GM23248 (cell line): ENCODE measurements at regions of chr1 and their contacts with region 1.

Region 1: GRCh38 chr1:205240118-205240517 is 12.4 kb downstream of the TMCC2 start:
- DNase-seq: no peak
- H3K4me3 ChIP-seq: no peak overlapping the region
- H3K27ac ChIP-seq: no peak overlapping the region
- H3K4me1 ChIP-seq: no peaks in the 10 kb centered on the region
- H3K27me3 ChIP-seq: no peaks in the 10 kb centered on the region

Region 2: GRCh38 chr1:204989266-204990058 is 250.7 kb before region 1 on chr1:
- in situ Hi-C with region 1: loop called (anchors 5 kb)
- DNase-seq: peak; percentile 86
- H3K4me3 ChIP-seq: no peak overlapping the region
- H3K27ac ChIP-seq: no peak overlapping the region
- H3K4me1 ChIP-seq: peaks cover 7% of the 10 kb centered on the region
- H3K27me3 ChIP-seq: no peaks in the 10 kb centered on the region

Region 3: DNA sequence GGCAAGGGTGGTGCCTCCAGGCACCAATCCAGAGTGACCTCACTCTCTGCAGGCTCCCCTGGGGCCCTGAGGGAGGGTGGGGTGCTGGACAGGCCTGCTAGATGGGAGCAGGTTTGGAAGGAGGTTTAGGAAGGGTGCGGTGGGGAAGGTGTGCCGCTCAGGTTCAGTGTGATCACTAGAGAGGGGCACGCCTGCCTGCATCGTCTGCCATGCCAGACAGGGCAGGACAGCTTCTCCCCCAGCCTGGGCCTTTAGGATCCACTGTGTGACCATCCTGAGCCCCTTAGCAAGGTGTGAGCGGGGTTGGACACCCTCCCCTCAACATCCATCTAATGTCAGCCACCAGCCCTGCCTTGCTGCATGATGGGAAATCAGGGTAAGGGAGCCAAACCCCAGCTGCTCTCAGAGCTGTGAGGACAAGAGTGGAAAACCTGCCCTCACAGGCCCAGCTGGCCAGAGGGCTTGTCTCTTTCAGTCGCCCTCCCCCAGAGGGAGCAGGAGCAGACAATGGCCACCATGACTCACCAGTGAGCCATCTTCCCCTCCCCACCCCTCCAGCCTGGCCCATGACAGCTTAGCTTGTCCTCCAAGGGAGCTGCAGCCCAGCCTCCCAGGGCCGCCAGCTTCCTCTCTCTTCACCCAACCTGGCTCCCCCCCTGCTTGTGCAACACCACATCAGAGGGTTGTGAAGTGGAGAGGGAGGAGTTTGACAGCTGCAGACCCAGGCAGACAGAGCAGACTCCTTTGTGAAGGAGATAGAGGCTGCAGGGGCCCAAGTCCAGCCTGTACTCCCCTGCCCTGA is 44.4 kb after region 1 on chr1:
- in situ Hi-C with region 1: no loop called
- DNase-seq: peak; percentile 99
- H3K4me3 ChIP-seq: no peak overlapping the region
- H3K27ac ChIP-seq: peak overlapping the region; percentile 50
- H3K4me1 ChIP-seq: peaks cover 49% of the 10 kb centered on the region
- H3K27me3 ChIP-seq: no peaks in the 10 kb centered on the region

Region 4: GRCh38 chr1:205543411-205544301 is 303.5 kb after region 1 on chr1:
- in situ Hi-C with region 1: no loop called
- DNase-seq: peak; percentile 95
- H3K4me3 ChIP-seq: peak overlapping the region; percentile 65
- H3K27ac ChIP-seq: peak overlapping the region; percentile 82
- H3K4me1 ChIP-seq: 0 out of 2 replicates have a peak, but pooled peaks cover 4% of the 10 kb centered on the region
- H3K27me3 ChIP-seq: peaks cover 2% of the 10 kb centered on the region; the same call in 1 of the 2 replicates